ENCODE measurements at regions of chr5 and their contacts with region 1.

Region 1: GRCh38 chr5:168268949-168269943 is 22.2 kb upstream of the WWC1 start:
- DNase-seq: peak; percentile 81
- H3K4me3 Mint-ChIP-seq: no peak overlapping the region
- H3K27ac Mint-ChIP-seq: no peak overlapping the region
- H3K4me1 Mint-ChIP-seq: peaks cover 12% of the 10 kb centered on the region
- H3K27me3 Mint-ChIP-seq: peaks cover 27% of the 10 kb centered on the region

Region 2: DNA sequence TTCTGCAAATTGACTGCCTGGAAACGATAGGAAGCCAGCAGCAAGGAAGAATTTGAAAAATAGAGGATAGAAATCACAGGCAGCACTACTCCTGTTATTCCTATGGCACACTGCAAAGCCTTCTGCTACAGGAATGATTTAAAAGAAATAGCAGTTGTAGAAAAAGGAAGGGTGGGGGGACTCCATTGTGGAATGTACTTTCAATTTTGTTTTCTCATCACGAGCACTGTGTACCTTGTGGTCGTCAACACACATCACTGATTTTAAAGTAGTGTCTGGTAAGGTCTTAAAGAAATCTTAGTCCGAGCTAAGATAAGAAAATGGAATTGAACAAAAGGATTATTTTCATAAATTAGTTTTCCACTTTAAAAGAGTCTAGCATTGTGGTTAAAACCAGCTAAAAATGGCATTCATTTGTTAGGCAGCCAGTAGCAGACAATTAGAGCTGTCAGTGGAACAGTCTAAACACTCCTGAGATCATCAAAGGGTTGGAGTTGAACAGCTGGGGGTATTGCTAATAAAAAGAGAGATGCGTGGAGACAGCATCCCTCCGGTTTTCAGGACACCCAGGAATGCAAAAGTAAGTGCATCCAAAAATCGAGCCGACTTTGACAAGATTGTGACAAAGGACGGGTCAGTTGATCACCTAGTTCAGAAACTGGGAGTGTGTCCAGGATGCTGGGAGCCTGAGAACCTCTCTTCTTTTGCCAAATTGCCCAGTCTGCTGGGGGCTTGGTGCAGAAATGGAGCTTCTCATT is 75.6 kb before region 1 on chr5:
- CTCF ChIA-PET with region 1: no interaction called
- DNase-seq: no peak
- H3K4me3 Mint-ChIP-seq: no peak overlapping the region
- H3K27ac Mint-ChIP-seq: no peak overlapping the region
- H3K4me1 Mint-ChIP-seq: no peaks in the 10 kb centered on the region
- H3K27me3 Mint-ChIP-seq: no peaks in the 10 kb centered on the region

Region 3: DNA sequence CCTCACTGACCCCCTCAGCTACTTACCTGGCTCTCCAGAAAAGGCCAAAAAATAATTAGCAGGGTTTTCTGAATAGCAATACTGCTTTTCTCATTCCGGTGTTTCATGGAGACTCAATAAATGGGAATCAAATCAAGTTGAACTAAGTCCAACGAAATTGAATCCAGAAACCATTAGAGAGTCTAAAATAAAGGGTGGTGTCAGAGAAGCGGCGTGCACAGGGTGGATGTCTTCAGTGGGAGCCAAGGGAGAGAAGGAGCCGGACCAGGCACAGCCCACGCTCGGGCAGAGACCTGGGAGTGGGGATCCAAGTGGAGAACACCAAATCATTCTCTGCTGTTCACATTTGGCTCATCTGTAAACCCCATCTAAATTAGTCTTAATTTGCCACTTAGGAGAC is 18.0 kb before region 1 on chr5:
- CTCF ChIA-PET with region 1: no interaction called
- DNase-seq: no peak
- H3K4me3 Mint-ChIP-seq: no peak overlapping the region
- H3K27ac Mint-ChIP-seq: no peak overlapping the region
- H3K4me1 Mint-ChIP-seq: no peaks in the 10 kb centered on the region
- H3K27me3 Mint-ChIP-seq: no peaks in the 10 kb centered on the region

Region 4: GRCh38 chr5:168328814-168329213 is 59.6 kb after region 1 on chr5:
- CTCF ChIA-PET with region 1: no interaction called
- DNase-seq: no peak
- H3K4me3 Mint-ChIP-seq: no peak overlapping the region
- H3K27ac Mint-ChIP-seq: no peak overlapping the region
- H3K4me1 Mint-ChIP-seq: no peaks in the 10 kb centered on the region
- H3K27me3 Mint-ChIP-seq: peaks cover 20% of the 10 kb centered on the region

Region 5: DNA sequence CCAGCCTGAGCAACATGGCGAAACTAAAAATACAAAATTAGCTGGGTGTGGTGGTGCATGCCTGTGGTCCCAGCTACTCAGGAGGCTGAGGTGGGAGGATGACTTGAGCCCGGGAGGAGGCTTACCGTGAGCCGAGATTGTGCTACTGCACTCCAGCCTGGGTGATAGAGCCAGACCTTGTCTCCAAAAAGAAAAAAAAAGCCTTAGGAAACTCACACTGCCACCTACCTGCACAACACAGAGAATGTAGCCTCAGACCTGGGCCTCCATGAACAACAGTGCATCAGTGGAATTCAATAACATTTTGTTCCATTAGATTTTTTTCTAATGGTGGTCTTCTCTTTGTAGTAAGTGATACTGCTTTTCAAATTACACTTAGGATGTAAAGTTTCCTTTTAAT is 153.2 kb after region 1 on chr5:
- CTCF ChIA-PET with region 1: interaction called, 16 read pairs
- DNase-seq: no peak
- H3K4me3 Mint-ChIP-seq: no peak overlapping the region
- H3K27ac Mint-ChIP-seq: no peak overlapping the region
- H3K4me1 Mint-ChIP-seq: no peaks in the 10 kb centered on the region
- H3K27me3 Mint-ChIP-seq: peaks cover 4% of the 10 kb centered on the region